Activated naive CD4-positive, alpha-beta T cell treated with anti-CD3 and anti-CD28 coated beads, Interleukin-2, amount 10 ng/mL, durations not matched to agents 7 days and 5 days (primary cell): ENCODE measurements at regions of chr6 and their contacts with region 1.

Region 1: DNA sequence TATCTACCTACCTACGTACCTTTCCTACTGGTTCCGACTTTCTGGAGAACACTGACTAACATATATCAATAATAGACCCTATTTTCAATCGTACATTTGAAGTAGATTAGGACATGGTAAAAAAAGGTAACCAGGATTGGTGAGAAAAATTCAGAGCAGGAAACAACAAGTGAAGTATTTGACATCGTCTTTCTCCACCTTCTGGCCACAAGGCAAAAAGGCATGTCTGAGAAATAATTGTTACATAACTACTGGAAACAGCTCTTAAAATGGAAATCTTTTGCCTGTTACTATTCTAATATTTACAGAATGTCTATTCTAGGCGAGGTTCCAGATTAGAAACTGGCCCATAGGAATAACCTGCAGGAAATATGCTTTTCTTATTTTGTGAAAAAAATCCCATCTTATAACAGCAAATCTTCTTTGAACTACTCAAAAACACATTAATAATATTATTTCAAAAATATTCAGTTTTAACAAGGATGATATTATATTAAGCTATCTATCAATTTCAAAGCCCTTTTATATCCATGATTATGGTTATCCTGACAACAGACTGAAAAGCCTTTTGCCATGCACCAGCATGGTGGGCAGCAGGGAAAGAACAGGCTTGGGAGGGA is 80.8 kb downstream of the RCAN2 start:
- DNase-seq: peak; percentile 44
- H3K4me3 Mint-ChIP-seq: no peak overlapping the region
- H3K27ac Mint-ChIP-seq: no peak overlapping the region
- H3K4me1 Mint-ChIP-seq: no peaks in the 10 kb centered on the region
- H3K27me3 Mint-ChIP-seq: no peaks in the 10 kb centered on the region

Region 2: GRCh38 chr6:46090115-46091079 is 320.0 kb before region 1 on chr6:
- CTCF ChIA-PET with region 1: interaction called, 30 read pairs
- DNase-seq: peak; percentile 69
- H3K4me3 Mint-ChIP-seq: no peak overlapping the region
- H3K27ac Mint-ChIP-seq: no peak overlapping the region
- H3K4me1 Mint-ChIP-seq: no peaks in the 10 kb centered on the region
- H3K27me3 Mint-ChIP-seq: peaks cover 11% of the 10 kb centered on the region

Region 3: GRCh38 chr6:46221222-46221793 is 189.1 kb before region 1 on chr6:
- CTCF ChIA-PET with region 1: interaction called, 84 read pairs
- DNase-seq: no peak
- H3K4me3 Mint-ChIP-seq: no peak overlapping the region
- H3K27ac Mint-ChIP-seq: no peak overlapping the region
- H3K4me1 Mint-ChIP-seq: no peaks in the 10 kb centered on the region
- H3K27me3 Mint-ChIP-seq: peaks cover 4% of the 10 kb centered on the region